ENCODE measurements at regions of chr19 and their contacts with region 1.

Region 1: DNA sequence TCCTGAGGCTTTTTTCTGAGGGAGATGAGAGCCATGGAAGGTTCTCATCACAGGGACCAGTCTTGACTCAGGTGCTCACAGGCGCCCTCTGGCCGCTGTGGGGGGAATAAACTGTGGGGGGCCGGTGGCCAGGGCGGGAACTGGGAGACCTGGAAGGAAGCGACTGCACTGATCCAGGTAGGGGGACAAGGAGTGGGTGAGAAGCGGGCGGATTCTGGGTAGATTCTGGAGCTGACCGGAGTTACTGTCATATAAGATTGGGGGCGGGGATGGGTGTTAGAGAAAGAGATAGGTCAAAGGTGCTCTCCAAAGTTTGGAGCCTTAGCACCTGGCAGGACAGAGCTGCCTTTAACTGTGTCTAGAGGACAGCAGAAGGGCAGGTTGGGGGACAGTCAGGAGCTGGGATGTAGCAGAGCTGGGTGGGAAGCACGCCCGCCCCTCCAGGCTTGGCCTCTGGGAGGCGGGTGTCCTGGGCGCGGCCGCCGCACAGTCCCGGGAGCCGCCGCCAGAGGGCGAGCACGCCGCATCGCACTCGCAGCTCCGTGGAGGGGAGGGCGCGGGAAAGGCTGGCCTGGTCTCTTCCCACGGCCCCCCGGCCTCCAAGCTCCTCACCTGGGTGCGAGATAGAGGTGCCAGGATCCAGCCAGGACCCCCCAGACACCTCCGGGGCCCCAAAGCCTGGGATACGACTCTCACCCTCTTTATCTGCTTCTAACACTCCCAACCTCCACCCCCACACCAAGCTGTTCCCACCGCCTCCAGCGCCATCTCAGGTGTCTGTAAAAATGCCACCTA is 4.2 kb upstream of the DAND5 start:
- DNase-seq: peak; percentile 64 to 89 (median 78)
- ATAC-seq: peak; percentile 95
- H3K4me3 ChIP-seq: peak overlapping the region; percentile 59
- H3K4me3 Mint-ChIP-seq: peak overlapping the region; percentile 82
- H3K27ac ChIP-seq: no peak overlapping the region
- H3K27ac Mint-ChIP-seq: no peak overlapping the region
- H3K4me1 ChIP-seq: peaks cover 13% of the 10 kb centered on the region
- H3K4me1 Mint-ChIP-seq: peaks cover 9% of the 10 kb centered on the region
- H3K27me3 ChIP-seq: no peaks in the 10 kb centered on the region
- H3K27me3 Mint-ChIP-seq: no peaks in the 10 kb centered on the region
- CTCF ChIP-seq: peak; percentile 99

Region 2: DNA sequence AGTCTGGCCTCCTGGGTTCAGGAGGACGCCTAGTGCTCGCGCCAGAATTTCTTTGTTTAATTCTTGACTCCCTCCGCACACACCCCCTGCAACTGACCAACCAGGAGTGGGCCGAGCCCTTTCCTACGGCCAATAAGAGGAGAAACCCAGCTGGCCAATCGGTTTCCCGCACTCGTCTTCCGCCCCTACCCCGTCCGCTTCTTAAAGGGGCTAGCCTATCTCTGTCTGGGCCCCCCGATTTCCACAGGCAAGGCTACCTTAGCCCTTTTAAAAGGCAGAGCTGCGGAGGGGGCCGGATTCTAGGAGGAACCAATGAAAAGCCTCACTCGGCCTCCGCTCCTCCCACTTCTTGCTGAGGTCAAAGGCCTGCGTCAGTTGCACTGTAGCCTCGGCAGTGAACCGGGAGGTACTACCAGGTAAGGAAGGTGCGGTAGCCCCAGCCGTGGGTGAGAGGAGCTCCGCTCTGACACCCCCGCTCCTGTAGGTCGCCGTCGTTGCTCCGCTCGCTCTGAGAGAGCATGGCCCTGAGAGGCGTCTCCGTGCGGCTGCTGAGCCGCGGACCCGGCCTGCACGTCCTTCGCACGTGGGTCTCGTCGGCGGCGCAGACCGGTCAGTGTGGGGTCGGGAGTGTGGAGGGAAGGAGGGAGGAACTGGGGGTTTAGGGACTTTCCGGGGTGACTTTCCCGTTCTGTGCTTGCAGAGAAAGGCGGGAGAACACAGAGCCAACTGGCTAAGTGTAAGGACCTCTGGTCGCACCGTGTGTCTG is 74.2 kb before region 1 on chr19 and contains the start of gene GCDH:
- CTCF ChIA-PET with region 1: interaction called, 17 read pairs
- POLR2A ChIA-PET with region 1: interaction called, 17 read pairs
- intact Hi-C with region 1: no loop called
- DNase-seq: peak; percentile 90 to 99 (median 94)
- ATAC-seq: peak; percentile 89
- H3K4me3 ChIP-seq: peak within 1 kb of the TSS; percentile 89
- H3K4me3 Mint-ChIP-seq: peak within 1 kb of the TSS; percentile 96
- H3K27ac ChIP-seq: peak within 1 kb of the TSS; percentile 67 to 68
- H3K27ac Mint-ChIP-seq: peak within 1 kb of the TSS; percentile 90
- H3K4me1 ChIP-seq: peaks cover 25% of the 10 kb centered on the region
- H3K4me1 Mint-ChIP-seq: peaks cover 31% of the 10 kb centered on the region
- H3K27me3 ChIP-seq: no peaks in the 10 kb centered on the region
- H3K27me3 Mint-ChIP-seq: no peaks in the 10 kb centered on the region
- CTCF ChIP-seq: no peak
- total RNA-seq, gene GCDH: 39.2 to 42.1 TPM

Region 3: GRCh38 chr19:12938234-12939025 is 26.8 kb before region 1 on chr19 and contains the start of gene CALR:
- CTCF ChIA-PET with region 1: interaction called, 25 read pairs
- POLR2A ChIA-PET with region 1: interaction called, 5 read pairs
- intact Hi-C with region 1: no loop called
- DNase-seq: peak; percentile 97 to 100 (median 99)
- ATAC-seq: peak; percentile 88
- H3K4me3 ChIP-seq: peak within 1 kb of the TSS; percentile 94
- H3K4me3 Mint-ChIP-seq: peak within 1 kb of the TSS; percentile 94
- H3K27ac ChIP-seq: peak within 1 kb of the TSS; percentile 74 to 80
- H3K27ac Mint-ChIP-seq: peak within 1 kb of the TSS; percentile 93
- H3K4me1 ChIP-seq: peaks cover 65% of the 10 kb centered on the region
- H3K4me1 Mint-ChIP-seq: peaks cover 54% of the 10 kb centered on the region
- H3K27me3 ChIP-seq: peaks cover 0 to under 1% of the 10 kb centered on the region in 2 experiments
- H3K27me3 Mint-ChIP-seq: no peaks in the 10 kb centered on the region
- CTCF ChIP-seq: no peak
- total RNA-seq, gene CALR: 558 to 559 TPM

Region 4: DNA sequence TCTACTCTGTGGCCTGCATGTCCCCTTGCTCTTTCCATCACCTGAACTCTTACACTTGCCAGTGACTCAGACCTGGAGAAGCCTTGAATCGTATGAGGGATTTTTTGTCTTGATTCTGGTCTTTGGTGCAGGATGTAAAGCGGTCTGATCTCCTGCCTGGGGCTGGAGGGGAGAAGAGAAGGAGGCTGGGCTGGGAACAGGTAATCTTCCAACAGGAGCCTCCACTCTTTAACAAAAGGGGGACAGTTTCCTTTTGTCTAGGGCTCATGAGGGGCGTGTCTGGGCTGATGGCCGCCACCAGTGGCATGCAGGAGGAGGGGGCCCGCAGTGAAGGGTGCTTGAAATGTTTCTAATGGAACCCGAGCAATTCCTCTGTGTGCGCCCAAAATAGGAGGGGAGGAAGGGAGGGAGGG is 54.8 kb after region 1 on chr19:
- CTCF ChIA-PET with region 1: no interaction called
- POLR2A ChIA-PET with region 1: no interaction called
- intact Hi-C with region 1: no loop called
- DNase-seq: no peak
- ATAC-seq: no peak
- H3K4me3 ChIP-seq: no peak overlapping the region
- H3K4me3 Mint-ChIP-seq: no peak overlapping the region
- H3K27ac ChIP-seq: no peak overlapping the region
- H3K27ac Mint-ChIP-seq: no peak overlapping the region
- H3K4me1 ChIP-seq: peaks cover 23% of the 10 kb centered on the region
- H3K4me1 Mint-ChIP-seq: peaks cover 16% of the 10 kb centered on the region
- H3K27me3 ChIP-seq: peaks cover 27 to 33% of the 10 kb centered on the region in 2 experiments
- H3K27me3 Mint-ChIP-seq: peaks cover 81% of the 10 kb centered on the region
- CTCF ChIP-seq: no peak

Region 5: DNA sequence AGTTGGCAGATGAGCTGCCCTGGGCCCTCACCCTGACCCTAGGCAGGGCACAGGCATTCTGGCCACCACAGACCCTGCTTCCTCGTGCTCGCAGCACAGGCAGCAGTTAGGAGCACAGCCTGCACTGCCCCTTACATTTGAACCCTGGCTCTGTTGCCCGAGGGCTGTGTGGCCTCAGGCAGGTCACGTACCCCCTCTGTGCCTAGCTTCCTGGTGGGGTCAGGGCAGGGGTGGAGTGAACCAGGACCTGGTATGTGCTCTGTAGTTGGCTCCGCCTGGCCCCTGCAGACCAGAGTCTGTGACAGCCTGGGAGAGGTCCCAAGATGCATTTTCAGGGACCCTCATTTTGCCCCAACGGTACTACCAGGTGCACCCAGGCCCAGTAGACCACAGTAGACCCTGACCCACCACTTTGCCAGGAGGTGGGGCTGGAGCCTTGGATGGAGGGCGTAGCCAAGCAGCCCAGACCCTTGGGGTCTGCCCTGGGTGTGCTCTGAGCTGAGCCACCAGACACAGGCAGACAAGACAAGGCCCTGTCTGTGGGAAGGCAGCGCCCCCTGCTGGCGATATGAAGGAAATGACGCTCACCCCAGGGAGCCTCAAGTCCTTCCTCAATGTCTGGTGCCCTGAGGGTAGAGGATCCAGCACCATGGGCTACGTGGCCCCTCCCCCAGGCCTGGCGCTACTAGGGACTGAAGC is 128.3 kb after region 1 on chr19:
- CTCF ChIA-PET with region 1: interaction called, 42 read pairs
- POLR2A ChIA-PET with region 1: interaction called, 9 read pairs
- intact Hi-C with region 1: no loop called
- DNase-seq: peak; percentile 68 to 91 (median 76)
- ATAC-seq: peak; percentile 73
- H3K4me3 ChIP-seq: no peak overlapping the region
- H3K4me3 Mint-ChIP-seq: peak overlapping the region; percentile 51
- H3K27ac ChIP-seq: no peak overlapping the region
- H3K27ac Mint-ChIP-seq: no peak overlapping the region
- H3K4me1 ChIP-seq: peaks cover 48% of the 10 kb centered on the region
- H3K4me1 Mint-ChIP-seq: peaks cover 27% of the 10 kb centered on the region
- H3K27me3 ChIP-seq: peaks cover 20 to 23% of the 10 kb centered on the region in 2 experiments
- H3K27me3 Mint-ChIP-seq: peaks cover 29% of the 10 kb centered on the region
- CTCF ChIP-seq: peak; percentile 89

Region 6: GRCh38 chr19:13104360-13104847 is 139.2 kb after region 1 on chr19:
- CTCF ChIA-PET with region 1: interaction called, 14 read pairs
- POLR2A ChIA-PET with region 1: no interaction called
- intact Hi-C with region 1: no loop called
- DNase-seq: peak; percentile 40 to 81 (median 59)
- ATAC-seq: peak; percentile 53
- H3K4me3 ChIP-seq: peak overlapping the region; percentile 77
- H3K4me3 Mint-ChIP-seq: peak overlapping the region; percentile 93
- H3K27ac ChIP-seq: peak overlapping the region; percentile 41 to 66
- H3K27ac Mint-ChIP-seq: peak overlapping the region; percentile 89
- H3K4me1 ChIP-seq: peaks cover 68% of the 10 kb centered on the region
- H3K4me1 Mint-ChIP-seq: peaks cover 38% of the 10 kb centered on the region
- H3K27me3 ChIP-seq: no peaks in the 10 kb centered on the region
- H3K27me3 Mint-ChIP-seq: no peaks in the 10 kb centered on the region
- CTCF ChIP-seq: peak; percentile 86

Measured in CD4-positive, alpha-beta T cell (primary cell).